WTC11 (cell line): ENCODE measurements at regions of chr19 and their contacts with region 1.

Region 1: DNA sequence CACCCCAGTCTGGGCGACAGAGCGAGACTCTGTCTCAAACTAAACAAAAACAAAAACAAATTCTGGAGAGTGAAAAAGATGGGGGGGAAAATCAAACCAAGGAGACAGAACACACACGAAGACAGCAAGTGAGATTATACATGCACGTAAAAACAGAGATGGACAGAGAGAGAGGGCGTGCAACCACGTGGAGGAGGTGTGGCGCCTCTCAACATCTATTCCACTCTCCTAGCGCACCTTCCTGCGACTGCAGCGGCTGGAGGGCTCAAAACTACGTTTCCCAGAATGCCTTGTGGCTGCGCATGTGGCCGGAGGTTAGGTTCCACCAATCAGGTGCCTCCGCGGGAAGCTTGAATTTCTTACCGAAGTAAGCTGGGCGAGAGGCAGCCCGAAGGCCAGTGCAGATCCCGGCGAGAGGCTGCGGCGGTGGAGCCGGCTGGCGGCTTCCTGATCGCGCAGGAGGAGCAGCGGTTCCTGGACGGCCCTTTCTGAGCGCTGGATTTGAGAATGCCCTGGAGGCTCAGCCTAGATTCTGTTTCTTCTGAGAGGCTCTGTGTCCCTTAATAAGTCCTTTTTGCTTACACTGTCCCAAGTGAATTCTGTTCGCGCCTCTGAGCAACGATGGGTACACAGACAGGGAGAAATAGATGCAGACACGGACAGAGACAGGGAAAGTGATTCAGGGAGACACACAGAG is 13.1 kb upstream of the NANOS2 start:
- DNase-seq: peak; percentile 95
- ATAC-seq: peak; percentile 99
- H3K4me3 Mint-ChIP-seq: peak overlapping the region; percentile 63
- H3K27ac Mint-ChIP-seq: no peak overlapping the region
- H3K4me1 Mint-ChIP-seq: peaks cover 8% of the 10 kb centered on the region
- H3K27me3 Mint-ChIP-seq: peaks cover 66% of the 10 kb centered on the region
- CTCF ChIP-seq: no peak

Region 2: GRCh38 chr19:45973578-45974338 is 46.0 kb after region 1 on chr19 and contains the start of gene NOVA2:
- CTCF ChIA-PET with region 1: interaction called, 12 read pairs
- POLR2A ChIA-PET with region 1: no interaction called
- DNase-seq: peak; percentile 99
- ATAC-seq: peak; percentile 99
- H3K4me3 Mint-ChIP-seq: peak within 1 kb of the TSS; percentile 61
- H3K27ac Mint-ChIP-seq: no peak within 1 kb of the TSS
- H3K4me1 Mint-ChIP-seq: peaks cover 16% of the 10 kb centered on the region
- H3K27me3 Mint-ChIP-seq: peaks cover 87% of the 10 kb centered on the region
- CTCF ChIP-seq: no peak
- total RNA-seq, gene NOVA2: 11.3 to 15.6 TPM (median 15.4 TPM) in 3 replicates